GM12878 (cell line): ENCODE measurements at regions of chr18 and their contacts with region 1.

Region 1: DNA sequence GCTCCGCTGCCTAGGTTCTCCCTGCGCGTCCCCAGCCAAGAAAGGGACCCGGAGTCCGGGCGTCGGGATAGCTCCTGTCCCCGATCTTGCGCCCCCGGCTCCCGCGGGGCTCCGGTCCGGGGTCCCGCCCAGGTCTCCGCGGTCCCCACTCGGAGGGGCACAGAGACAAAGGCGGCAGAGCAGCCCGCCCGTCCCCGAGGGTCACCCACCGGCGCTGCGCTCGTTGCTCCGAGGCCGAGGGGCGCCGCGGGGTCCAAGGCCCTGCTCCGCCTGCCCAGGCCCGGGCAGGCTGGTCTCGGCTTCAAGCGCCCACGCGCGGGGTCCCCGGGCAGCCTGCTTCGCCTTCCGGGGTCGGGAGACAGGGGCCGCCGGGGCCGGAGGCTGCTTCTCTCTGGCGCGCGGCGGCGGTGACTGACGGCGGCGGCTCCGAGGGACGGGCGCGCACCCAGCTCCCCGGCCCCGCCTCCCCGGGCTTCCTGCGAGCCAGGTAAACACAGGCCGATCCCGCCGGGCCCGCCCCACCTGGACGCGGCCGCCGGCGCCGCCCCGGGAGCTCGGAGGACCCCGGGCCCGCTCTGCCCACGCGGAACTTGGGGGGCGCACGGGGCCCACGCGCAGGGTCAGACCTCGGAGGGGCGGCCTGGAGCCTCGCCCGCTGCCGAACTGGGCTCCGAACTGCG is at the start of gene MBP:
- DNase-seq: no peak
- ATAC-seq: peak; percentile 67
- H3K4me3 ChIP-seq: peak within 1 kb of the TSS; percentile 98
- H3K27ac ChIP-seq: peak within 1 kb of the TSS; percentile 97
- H3K4me1 ChIP-seq: peaks cover 33% of the 10 kb centered on the region
- H3K27me3 ChIP-seq: no peaks in the 10 kb centered on the region
- CTCF ChIP-seq: no peak
- EP300 ChIP-seq: no peak
- POLR2A ChIP-seq: peak; percentile 82
- RAD21 ChIP-seq: no peak
- polyA plus RNA-seq, gene MBP: 12.2 to 13.3 TPM

Region 2: DNA sequence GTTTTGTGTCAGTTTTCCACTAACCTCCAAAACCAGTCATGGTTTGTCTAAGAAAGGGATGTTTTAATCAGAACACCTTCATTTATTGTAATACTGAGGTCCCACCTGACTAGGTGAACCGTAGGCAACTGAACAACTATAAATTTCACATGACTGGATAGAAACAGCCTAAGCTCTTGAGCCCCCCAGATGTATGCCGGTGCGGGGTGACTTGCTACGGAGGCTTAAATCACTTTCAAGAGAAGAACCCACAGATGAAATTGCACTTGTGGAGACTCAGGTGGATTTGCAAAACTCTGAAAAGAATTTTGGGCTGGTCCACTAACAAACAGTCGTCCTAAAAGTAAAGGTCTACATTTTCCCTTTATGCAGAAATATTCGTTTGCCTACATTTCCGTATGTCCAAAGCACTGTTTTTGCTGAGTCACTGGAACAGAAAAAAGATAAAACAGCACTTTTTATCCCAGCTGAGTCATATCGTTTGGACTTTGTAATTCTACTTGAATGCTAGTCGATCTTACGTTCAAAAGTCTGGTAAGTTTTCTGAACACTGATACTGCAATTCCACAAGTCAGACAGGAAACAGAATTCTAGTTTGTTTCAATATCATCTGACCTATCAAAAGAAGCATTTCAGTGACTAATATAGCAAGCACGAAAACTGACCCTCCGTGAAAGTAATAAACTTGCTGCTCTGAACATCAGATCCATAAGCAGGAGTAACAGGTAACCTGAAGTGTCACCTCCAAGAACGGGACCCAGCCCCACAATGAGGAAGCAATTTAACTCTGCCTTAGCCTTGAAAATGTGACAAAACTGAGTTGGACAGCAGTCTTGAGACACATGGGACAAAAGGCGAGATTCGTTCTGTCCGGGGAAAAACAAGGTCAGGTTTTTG is 655.6 kb before region 1 on chr18:
- CTCF ChIA-PET with region 1: no interaction called
- POLR2A ChIA-PET with region 1: no interaction called
- RAD21 ChIA-PET with region 1: no interaction called
- SMC1A ChIA-PET with region 1: no interaction called
- in situ Hi-C with region 1: loop called (anchors 10 kb)
- intact Hi-C with region 1: no loop called
- DNase-seq: no peak
- ATAC-seq: peak; percentile 81
- H3K4me3 ChIP-seq: peak overlapping the region; percentile 54
- H3K27ac ChIP-seq: peak overlapping the region; percentile 83
- H3K4me1 ChIP-seq: peaks cover 24% of the 10 kb centered on the region
- H3K27me3 ChIP-seq: no peaks in the 10 kb centered on the region
- CTCF ChIP-seq: no peak
- EP300 ChIP-seq: no peak
- POLR2A ChIP-seq: peak; percentile 38; the same call in 1 of the 2 replicates
- RAD21 ChIP-seq: no peak

Region 3: GRCh38 chr18:76822510-76823160 is 309.9 kb before region 1 on chr18 and contains the start of gene ZNF236:
- CTCF ChIA-PET with region 1: no interaction called
- POLR2A ChIA-PET with region 1: interaction called, 3 read pairs
- RAD21 ChIA-PET with region 1: no interaction called
- SMC1A ChIA-PET with region 1: interaction called, 3 read pairs
- in situ Hi-C with region 1: no loop called
- intact Hi-C with region 1: loop called (anchors 5 kb)
- DNase-seq: no peak
- ATAC-seq: peak; percentile 47
- H3K4me3 ChIP-seq: peak within 1 kb of the TSS; percentile 100
- H3K27ac ChIP-seq: peak within 1 kb of the TSS; percentile 95
- H3K4me1 ChIP-seq: peaks cover 16% of the 10 kb centered on the region
- H3K27me3 ChIP-seq: no peaks in the 10 kb centered on the region
- CTCF ChIP-seq: no peak
- EP300 ChIP-seq: no peak
- POLR2A ChIP-seq: peak; percentile 76
- RAD21 ChIP-seq: no peak
- polyA plus RNA-seq, gene ZNF236: 1.0 to 1.3 TPM

Region 4: GRCh38 chr18:77054606-77055428 is 77.7 kb before region 1 on chr18:
- CTCF ChIA-PET with region 1: interaction called, 16 read pairs
- POLR2A ChIA-PET with region 1: no interaction called
- RAD21 ChIA-PET with region 1: interaction called, 7 read pairs
- SMC1A ChIA-PET with region 1: interaction called, 7 read pairs
- in situ Hi-C with region 1: loop called (anchors 10 kb)
- intact Hi-C with region 1: no loop called
- DNase-seq: peak; percentile 80
- ATAC-seq: peak; percentile 93
- H3K4me3 ChIP-seq: peak overlapping the region; percentile 53
- H3K27ac ChIP-seq: peak overlapping the region; percentile 88
- H3K4me1 ChIP-seq: peaks cover 46% of the 10 kb centered on the region
- H3K27me3 ChIP-seq: no peaks in the 10 kb centered on the region
- CTCF ChIP-seq: peak; percentile 73 to 78 (median 75)
- EP300 ChIP-seq: peak; percentile 70 to 74
- POLR2A ChIP-seq: no peak; the same call in 1 of the 2 replicates
- RAD21 ChIP-seq: peak; percentile 58

Region 5: DNA sequence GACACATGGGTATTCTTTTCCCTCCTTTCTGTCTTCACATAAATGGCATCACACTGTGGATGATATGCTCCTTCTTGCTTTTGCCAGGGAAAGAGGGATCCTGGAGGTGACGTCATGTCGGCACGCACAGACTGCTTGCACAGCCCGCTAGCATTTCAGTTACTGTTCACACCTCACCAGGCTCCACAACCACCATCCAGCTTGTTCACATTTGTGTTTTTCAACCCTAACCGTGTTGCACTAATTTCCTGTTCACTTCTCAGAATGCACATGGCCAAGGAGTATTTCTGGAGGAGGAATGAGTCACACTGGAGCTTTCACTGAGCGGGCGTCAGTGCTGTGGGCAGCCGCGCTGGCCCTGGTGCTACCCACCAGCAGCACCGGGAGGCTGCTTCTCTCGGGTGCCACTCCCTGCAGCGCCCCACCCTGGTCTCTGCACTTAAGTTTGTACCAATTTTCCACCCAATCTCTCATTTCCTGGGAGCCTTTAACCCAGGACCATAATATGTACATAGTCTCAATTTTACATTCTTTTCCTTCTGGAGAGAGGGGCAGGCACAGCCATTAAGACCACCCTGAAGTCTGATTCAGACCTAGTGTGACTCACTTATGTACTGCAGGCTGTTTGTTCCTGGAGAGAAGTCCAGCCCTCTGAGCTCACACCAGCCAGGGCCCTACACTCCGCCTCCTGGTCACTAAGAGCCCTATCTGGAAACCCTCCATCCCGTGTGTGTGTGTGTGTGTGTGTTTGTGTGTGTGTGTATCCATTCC is 65.0 kb before region 1 on chr18:
- CTCF ChIA-PET with region 1: interaction called, 5 read pairs
- POLR2A ChIA-PET with region 1: interaction called, 8 read pairs
- RAD21 ChIA-PET with region 1: interaction called, 21 read pairs
- SMC1A ChIA-PET with region 1: interaction called, 69 read pairs
- in situ Hi-C with region 1: loop called (anchors 10 kb)
- intact Hi-C with region 1: loop called (anchors 1 kb)
- DNase-seq: peak; percentile 59
- ATAC-seq: peak; percentile 68
- H3K4me3 ChIP-seq: peak overlapping the region; percentile 23; the same call in 1 of the 2 replicates
- H3K27ac ChIP-seq: peak overlapping the region; percentile 97
- H3K4me1 ChIP-seq: peaks cover 71% of the 10 kb centered on the region
- H3K27me3 ChIP-seq: no peaks in the 10 kb centered on the region
- CTCF ChIP-seq: peak; percentile 15 to 18 (median 16); a peak in 2 of 6 replicates
- EP300 ChIP-seq: no peak
- POLR2A ChIP-seq: no peak
- RAD21 ChIP-seq: no peak

Region 6: DNA sequence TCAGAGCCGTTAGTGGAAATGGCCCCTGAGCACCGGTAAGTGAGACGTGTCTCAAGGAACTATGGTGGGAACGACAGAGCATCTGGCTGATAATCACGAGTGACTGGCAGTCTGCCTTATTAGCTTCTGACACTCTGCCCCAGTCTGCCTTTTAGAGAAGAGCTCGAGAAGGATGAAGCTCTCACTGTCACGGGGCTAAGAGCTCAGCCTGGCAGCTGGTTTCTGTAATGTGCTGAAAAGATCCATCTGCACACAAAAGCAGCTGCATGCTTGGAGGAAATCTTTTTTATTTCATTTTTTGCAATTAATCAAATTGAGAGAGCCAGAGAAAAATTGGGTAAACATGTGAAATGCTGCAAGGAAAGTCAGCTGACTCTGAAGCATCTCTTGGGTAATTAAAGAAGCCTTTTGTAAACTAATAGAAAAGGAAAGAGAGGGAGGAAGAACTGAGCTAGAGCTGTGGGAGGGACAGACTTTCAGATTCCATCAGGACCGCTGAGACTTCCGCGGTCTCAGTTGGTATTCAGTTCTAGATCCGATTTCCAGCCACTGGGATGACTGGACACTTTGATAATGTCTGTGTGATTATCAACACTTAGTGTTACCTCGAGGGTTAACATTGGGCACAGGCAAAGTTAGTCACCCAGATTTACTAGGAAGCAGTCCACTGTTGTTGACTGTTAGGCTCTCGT is 24.4 kb before region 1 on chr18:
- CTCF ChIA-PET with region 1: interaction called, 17 read pairs
- POLR2A ChIA-PET with region 1: interaction called, 6 read pairs
- RAD21 ChIA-PET with region 1: interaction called, 73 read pairs
- SMC1A ChIA-PET with region 1: interaction called, 22 read pairs
- in situ Hi-C with region 1: no loop called
- intact Hi-C with region 1: no loop called
- DNase-seq: no peak
- ATAC-seq: peak; percentile 42
- H3K4me3 ChIP-seq: no peak overlapping the region; the same call in 1 of the 2 replicates
- H3K27ac ChIP-seq: peak overlapping the region; percentile 78
- H3K4me1 ChIP-seq: peaks cover 46% of the 10 kb centered on the region
- H3K27me3 ChIP-seq: no peaks in the 10 kb centered on the region
- CTCF ChIP-seq: no peak
- EP300 ChIP-seq: no peak
- POLR2A ChIP-seq: no peak
- RAD21 ChIP-seq: no peak

Region 7: GRCh38 chr18:77495982-77496690 is 363.6 kb after region 1 on chr18:
- CTCF ChIA-PET with region 1: no interaction called
- POLR2A ChIA-PET with region 1: no interaction called
- RAD21 ChIA-PET with region 1: no interaction called
- SMC1A ChIA-PET with region 1: no interaction called
- in situ Hi-C with region 1: no loop called
- intact Hi-C with region 1: no loop called
- DNase-seq: no peak
- ATAC-seq: no peak
- H3K4me3 ChIP-seq: no peak overlapping the region
- H3K27ac ChIP-seq: no peak overlapping the region
- H3K4me1 ChIP-seq: no peaks in the 10 kb centered on the region
- H3K27me3 ChIP-seq: 0 out of 4 replicates have a peak, but pooled peaks cover 0 to 2% of the 10 kb centered on the region in 2 experiments
- CTCF ChIP-seq: no peak
- EP300 ChIP-seq: no peak
- POLR2A ChIP-seq: no peak
- RAD21 ChIP-seq: no peak